Posterior cingulate gyrus (tissue), 11 donors: ENCODE measurements at regions of chr17 and their contacts with region 1.

Region 1: GRCh38 chr17:78925234-78925633 is at the start of gene TIMP2:
- DNase-seq: peak; percentile 82 to 98 (median 89)

Region 2: DNA sequence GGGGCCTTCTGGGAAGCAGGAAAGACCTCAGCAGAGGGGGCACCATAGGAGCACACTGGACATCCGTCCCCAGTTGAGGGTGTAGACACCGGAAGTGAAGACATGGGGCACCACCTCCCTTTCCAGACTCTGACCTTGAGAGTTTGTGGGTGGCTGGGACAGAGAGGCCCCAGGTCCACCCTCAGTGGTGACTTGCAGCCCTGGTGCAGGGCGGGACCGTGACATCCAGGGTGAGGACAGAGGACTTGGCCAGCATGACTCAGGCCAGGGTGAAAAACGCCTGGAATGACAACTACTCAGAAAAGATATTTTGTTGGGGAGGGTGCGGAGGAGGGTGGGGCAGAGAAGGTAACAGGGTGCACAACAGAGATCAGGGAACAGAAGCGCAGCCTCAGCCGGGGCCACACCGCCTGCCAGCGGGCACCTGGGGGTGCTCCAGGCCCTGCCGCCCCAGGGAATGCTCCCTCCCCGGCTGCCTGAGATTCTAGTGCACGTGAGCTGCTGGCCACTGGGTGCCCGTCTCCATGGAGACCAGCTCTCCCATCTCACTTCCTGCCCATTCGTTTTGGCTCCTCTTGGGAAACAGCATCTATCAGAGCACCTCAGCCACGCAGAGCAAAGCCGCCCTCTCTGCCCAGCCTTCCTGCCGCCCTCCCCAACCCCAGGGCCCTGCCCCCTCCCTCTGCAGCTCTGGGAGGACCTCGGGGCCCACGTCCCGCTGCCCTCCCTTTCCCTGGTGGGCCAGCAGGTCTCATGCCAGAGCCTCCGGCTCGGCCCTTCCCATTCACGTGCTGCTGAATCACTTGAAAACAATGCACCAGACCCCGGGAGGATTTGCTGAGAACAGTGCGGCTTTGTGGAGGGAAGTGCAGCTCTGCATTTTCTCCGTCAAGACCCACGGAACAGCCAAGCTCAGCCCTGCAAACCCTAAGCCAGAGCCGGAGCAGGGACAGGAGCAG is 41.8 kb before region 1 on chr17:
- intact Hi-C with region 1: loop called (anchors 5 kb)
- DNase-seq: peak; percentile 71 to 97 (median 84)

Region 3: GRCh38 chr17:78970834-78971773 is 45.9 kb after region 1 on chr17:
- intact Hi-C with region 1: loop called (anchors 1 kb)
- DNase-seq: peak; percentile 64 to 96 (median 86)